Keratinocyte (primary cell): ENCODE measurements at regions of chr12 and their contacts with region 1.

Region 1: GRCh38 chr12:95164656-95165055 is 52.6 kb downstream of the FGD6 start:
- DNase-seq: no peak
- H3K4me3 ChIP-seq: no peak overlapping the region
- H3K27ac ChIP-seq: no peak overlapping the region
- H3K4me1 ChIP-seq: peaks cover 14% of the 10 kb centered on the region
- H3K27me3 ChIP-seq: no peaks in the 10 kb centered on the region
- CTCF ChIP-seq: no peak

Region 2: DNA sequence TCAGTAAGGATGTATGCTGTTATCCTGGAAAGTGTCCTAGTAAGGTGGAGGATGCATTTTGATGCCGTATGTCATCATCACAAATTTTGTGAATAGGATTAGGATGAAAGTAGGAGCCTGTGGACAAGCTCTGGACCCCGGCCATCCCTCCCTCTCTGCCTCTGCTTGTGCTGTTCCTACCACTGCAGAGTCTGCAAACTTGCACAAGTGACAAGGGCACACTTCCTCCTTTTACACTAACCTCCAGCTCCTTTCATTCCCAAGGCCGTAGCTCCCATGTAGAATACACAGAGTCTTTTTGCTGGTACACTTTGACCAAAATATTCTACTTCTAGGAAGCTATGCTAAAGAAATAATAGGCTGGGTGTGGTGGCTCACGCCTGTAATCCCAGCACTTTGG is 501.0 kb before region 1 on chr12:
- dilution Hi-C with region 1: no loop called
- DNase-seq: no peak
- H3K4me3 ChIP-seq: no peak overlapping the region
- H3K27ac ChIP-seq: no peak overlapping the region
- H3K4me1 ChIP-seq: peaks cover 19% of the 10 kb centered on the region
- H3K27me3 ChIP-seq: no peaks in the 10 kb centered on the region
- CTCF ChIP-seq: no peak

Region 3: DNA sequence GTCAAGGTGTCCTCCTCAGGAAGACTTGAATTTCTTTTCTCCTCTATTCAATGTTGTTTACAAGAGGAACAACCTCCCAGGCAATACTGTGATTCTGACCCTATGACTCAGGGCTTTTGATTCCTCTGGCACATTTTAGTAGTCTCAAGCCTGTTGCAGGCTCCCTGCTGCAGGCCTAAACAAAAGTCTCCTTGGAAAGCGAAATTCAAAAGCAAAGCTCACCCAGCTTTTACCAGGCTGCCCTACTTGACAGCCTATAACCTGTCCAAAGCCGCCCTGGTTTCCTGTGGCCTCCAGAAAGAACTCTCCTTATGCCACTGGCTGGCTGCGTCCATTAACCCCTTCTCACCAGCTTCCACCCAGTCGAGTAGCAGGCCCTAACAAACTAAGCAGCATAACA is 41.0 kb after region 1 on chr12:
- dilution Hi-C with region 1: loop called (anchors 5 kb)
- DNase-seq: no peak
- H3K4me3 ChIP-seq: peak overlapping the region in 2 of 3 experiments; percentile 41 to 45
- H3K27ac ChIP-seq: peak overlapping the region; percentile 100
- H3K4me1 ChIP-seq: peaks cover 61% of the 10 kb centered on the region
- H3K27me3 ChIP-seq: no peaks in the 10 kb centered on the region
- CTCF ChIP-seq: no peak